H1 (cell line): ENCODE measurements at regions of chr1 and their contacts with region 1.

Region 1: GRCh38 chr1:231170875-231171274 is 9.0 kb downstream of the TRIM67 start:
- DNase-seq: no peak
- H3K4me3 ChIP-seq: no peak overlapping the region
- H3K27ac ChIP-seq: no peak overlapping the region
- H3K4me1 ChIP-seq: no peaks in the 10 kb centered on the region
- H3K27me3 ChIP-seq: peaks cover 0 to 7% (median 4%) of the 10 kb centered on the region in 4 experiments; a peak in 3 of 7 replicates
- CTCF ChIP-seq: peak in 2 of 3 experiments; percentile 29 to 59; a peak in 3 of 4 replicates
- EP300 ChIP-seq: no peak
- POLR2A ChIP-seq: no peak
- RAD21 ChIP-seq: peak; percentile 26 to 32; a peak in 3 of 4 replicates

Region 2: GRCh38 chr1:231075020-231075419 is 95.9 kb before region 1 on chr1:
- CTCF ChIA-PET with region 1: no interaction called
- POLR2A ChIA-PET with region 1: no interaction called
- DNase-seq: no peak
- H3K4me3 ChIP-seq: no peak overlapping the region
- H3K27ac ChIP-seq: no peak overlapping the region
- H3K4me1 ChIP-seq: peaks cover 0 to 2% (median 0%) of the 10 kb centered on the region in 4 experiments; a peak in 1 of 7 replicates
- H3K27me3 ChIP-seq: peaks cover 0 to 3% (median 0%) of the 10 kb centered on the region in 4 experiments; a peak in 2 of 7 replicates
- CTCF ChIP-seq: no peak
- EP300 ChIP-seq: no peak
- POLR2A ChIP-seq: no peak
- RAD21 ChIP-seq: no peak

Region 3: GRCh38 chr1:231121533-231121932 is 49.3 kb before region 1 on chr1:
- CTCF ChIA-PET with region 1: no interaction called
- POLR2A ChIA-PET with region 1: no interaction called
- DNase-seq: no peak
- H3K4me3 ChIP-seq: no peak overlapping the region
- H3K27ac ChIP-seq: no peak overlapping the region
- H3K4me1 ChIP-seq: no peaks in the 10 kb centered on the region
- H3K27me3 ChIP-seq: no peaks in the 10 kb centered on the region; a peak in 3 of 7 replicates
- CTCF ChIP-seq: no peak
- EP300 ChIP-seq: no peak
- POLR2A ChIP-seq: no peak
- RAD21 ChIP-seq: no peak

Region 4: GRCh38 chr1:231139659-231140654 is 30.9 kb before region 1 on chr1:
- CTCF ChIA-PET with region 1: no interaction called
- POLR2A ChIA-PET with region 1: no interaction called
- DNase-seq: no peak
- H3K4me3 ChIP-seq: no peak overlapping the region
- H3K27ac ChIP-seq: no peak overlapping the region
- H3K4me1 ChIP-seq: no peaks in the 10 kb centered on the region
- H3K27me3 ChIP-seq: peaks cover 0 to 7% (median 3%) of the 10 kb centered on the region in 4 experiments; a peak in 3 of 7 replicates
- CTCF ChIP-seq: no peak
- EP300 ChIP-seq: no peak
- POLR2A ChIP-seq: no peak
- RAD21 ChIP-seq: no peak

Region 5: DNA sequence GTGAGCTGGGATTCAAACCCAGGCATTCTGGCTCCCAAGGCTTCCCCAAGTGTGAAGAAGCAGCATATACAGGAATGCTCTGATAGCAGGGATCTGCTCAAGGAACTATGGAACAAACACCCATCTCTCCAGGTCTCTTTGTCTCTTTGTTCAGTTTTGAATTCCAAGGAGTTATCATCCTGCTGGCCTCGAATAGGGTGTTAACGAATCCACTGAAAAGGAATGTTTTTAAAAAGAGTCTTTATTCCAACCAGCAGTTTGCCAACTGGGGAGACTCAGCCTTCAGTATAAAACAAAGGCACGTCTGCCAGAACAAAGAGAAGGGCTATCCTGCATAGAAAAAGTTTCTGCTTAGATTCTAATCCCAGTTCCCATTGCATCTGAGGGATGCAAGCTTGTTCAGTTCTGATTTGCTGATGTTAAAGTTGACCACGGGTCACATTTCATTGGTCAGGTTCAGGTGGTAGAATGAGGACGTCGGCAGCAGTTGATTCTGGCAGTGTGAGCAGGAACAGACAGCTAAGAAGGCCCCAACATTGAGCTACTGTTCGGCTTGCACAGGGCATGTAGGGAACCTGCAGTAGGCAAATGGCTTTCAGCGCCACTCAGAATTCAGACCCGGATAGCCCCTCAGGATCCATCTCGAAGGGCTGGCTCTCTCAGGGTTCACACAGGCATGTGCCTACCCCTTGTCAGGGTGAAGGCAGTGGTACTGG is 13.2 kb after region 1 on chr1:
- CTCF ChIA-PET with region 1: interaction called, 34 read pairs
- POLR2A ChIA-PET with region 1: no interaction called
- DNase-seq: peak in 1 of 2 experiments; percentile 49
- H3K4me3 ChIP-seq: no peak overlapping the region
- H3K27ac ChIP-seq: no peak overlapping the region
- H3K4me1 ChIP-seq: peaks cover 0 to 11% (median 8%) of the 10 kb centered on the region in 4 experiments; a peak in 5 of 7 replicates
- H3K27me3 ChIP-seq: peaks cover 0 to 18% (median 10%) of the 10 kb centered on the region in 4 experiments; a peak in 4 of 7 replicates
- CTCF ChIP-seq: no peak
- EP300 ChIP-seq: no peak
- POLR2A ChIP-seq: no peak
- RAD21 ChIP-seq: no peak

Region 6: GRCh38 chr1:231315887-231316286 is 145.0 kb after region 1 on chr1:
- CTCF ChIA-PET with region 1: no interaction called
- POLR2A ChIA-PET with region 1: no interaction called
- DNase-seq: peak; percentile 47 to 81
- H3K4me3 ChIP-seq: no peak overlapping the region
- H3K27ac ChIP-seq: no peak overlapping the region
- H3K4me1 ChIP-seq: no peaks in the 10 kb centered on the region
- H3K27me3 ChIP-seq: no peaks in the 10 kb centered on the region
- CTCF ChIP-seq: peak; percentile 76 to 90 (median 81)
- EP300 ChIP-seq: no peak
- POLR2A ChIP-seq: no peak
- RAD21 ChIP-seq: peak; percentile 73 to 77